GM12878 (cell line): ENCODE measurements at regions of chrX and their contacts with region 1.

Region 1: DNA sequence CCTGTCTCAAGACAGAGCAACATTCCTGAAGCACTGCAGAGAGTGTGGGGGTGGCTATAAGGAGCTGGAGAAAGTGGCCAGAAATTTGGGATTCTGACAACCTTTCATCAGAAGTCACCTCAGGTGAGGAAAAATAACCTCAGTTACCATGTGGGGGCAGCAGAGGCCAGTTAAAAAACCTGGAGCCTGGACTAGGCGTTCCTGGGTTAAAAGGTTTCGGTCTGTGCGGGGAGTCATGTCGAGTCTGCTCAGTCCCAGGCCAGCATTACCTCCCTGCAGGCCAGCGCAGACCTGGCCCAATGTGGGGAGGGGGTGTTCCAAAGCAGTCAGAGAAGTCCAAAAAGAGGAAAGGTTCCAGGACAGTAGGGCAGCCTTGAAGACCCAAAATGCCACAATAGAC is 10.9 kb upstream of the NALF2 start:
- DNase-seq: no peak
- ATAC-seq: peak; percentile 64
- H3K4me3 ChIP-seq: no peak overlapping the region
- H3K27ac ChIP-seq: no peak overlapping the region
- H3K4me1 ChIP-seq: no peaks in the 10 kb centered on the region
- H3K27me3 ChIP-seq: no peaks in the 10 kb centered on the region
- CTCF ChIP-seq: peak; percentile 28 to 45 (median 38); a peak in 4 of 6 replicates
- EP300 ChIP-seq: no peak
- POLR2A ChIP-seq: no peak
- RAD21 ChIP-seq: peak; percentile 64

Region 2: GRCh38 chrX:69524781-69525363 is 31.7 kb after region 1 on chrX:
- CTCF ChIA-PET with region 1: no interaction called
- POLR2A ChIA-PET with region 1: no interaction called
- RAD21 ChIA-PET with region 1: no interaction called
- SMC1A ChIA-PET with region 1: no interaction called
- in situ Hi-C with region 1: no loop called
- intact Hi-C with region 1: no loop called
- DNase-seq: no peak
- ATAC-seq: no peak
- H3K4me3 ChIP-seq: no peak overlapping the region
- H3K27ac ChIP-seq: no peak overlapping the region
- H3K4me1 ChIP-seq: no peaks in the 10 kb centered on the region
- H3K27me3 ChIP-seq: no peaks in the 10 kb centered on the region
- CTCF ChIP-seq: no peak
- EP300 ChIP-seq: no peak
- POLR2A ChIP-seq: no peak
- RAD21 ChIP-seq: no peak

Region 3: DNA sequence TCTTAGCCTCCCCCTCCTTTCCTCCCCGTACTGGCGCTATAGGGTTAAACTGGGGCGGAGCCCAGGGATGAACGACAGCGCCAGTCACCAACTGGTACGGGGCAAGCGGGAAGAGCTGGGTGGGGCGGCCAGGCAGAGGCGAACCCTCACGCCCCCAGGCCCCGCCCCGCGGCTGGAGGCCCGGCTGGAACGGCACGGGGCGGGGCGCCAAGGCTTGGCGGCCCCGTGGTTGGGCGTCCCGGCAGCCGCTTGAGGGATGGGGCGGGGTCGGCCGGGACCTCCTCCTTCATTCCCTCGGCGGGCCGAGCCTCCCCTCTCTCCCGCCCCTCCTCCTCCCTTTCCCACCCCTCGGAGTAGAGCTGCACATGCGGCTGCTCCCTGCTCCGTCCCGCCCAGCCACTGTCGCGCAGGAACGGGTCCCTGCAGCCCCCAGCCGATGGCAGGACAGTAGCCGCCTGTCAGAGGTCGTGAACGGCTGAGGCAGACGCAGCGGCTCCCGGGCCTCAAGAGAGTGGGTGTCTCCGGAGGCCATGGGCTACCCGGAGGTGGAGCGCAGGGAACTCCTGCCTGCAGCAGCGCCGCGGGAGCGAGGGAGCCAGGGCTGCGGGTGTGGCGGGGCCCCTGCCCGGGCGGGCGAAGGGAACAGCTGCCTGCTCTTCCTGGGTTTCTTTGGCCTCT is 122.7 kb after region 1 on chrX and contains the start of gene EDA:
- CTCF ChIA-PET with region 1: interaction called, 7 read pairs
- POLR2A ChIA-PET with region 1: no interaction called
- RAD21 ChIA-PET with region 1: no interaction called
- SMC1A ChIA-PET with region 1: interaction called, 4 read pairs
- in situ Hi-C with region 1: no loop called
- intact Hi-C with region 1: loop called (anchors 5 kb)
- DNase-seq: no peak
- ATAC-seq: peak; percentile 84
- H3K4me3 ChIP-seq: no peak within 1 kb of the TSS
- H3K27ac ChIP-seq: no peak within 1 kb of the TSS
- H3K4me1 ChIP-seq: no peaks in the 10 kb centered on the region
- H3K27me3 ChIP-seq: no peaks in the 10 kb centered on the region
- CTCF ChIP-seq: no peak
- EP300 ChIP-seq: no peak
- POLR2A ChIP-seq: no peak
- RAD21 ChIP-seq: no peak
- polyA plus RNA-seq, gene EDA: not detected

Region 4: DNA sequence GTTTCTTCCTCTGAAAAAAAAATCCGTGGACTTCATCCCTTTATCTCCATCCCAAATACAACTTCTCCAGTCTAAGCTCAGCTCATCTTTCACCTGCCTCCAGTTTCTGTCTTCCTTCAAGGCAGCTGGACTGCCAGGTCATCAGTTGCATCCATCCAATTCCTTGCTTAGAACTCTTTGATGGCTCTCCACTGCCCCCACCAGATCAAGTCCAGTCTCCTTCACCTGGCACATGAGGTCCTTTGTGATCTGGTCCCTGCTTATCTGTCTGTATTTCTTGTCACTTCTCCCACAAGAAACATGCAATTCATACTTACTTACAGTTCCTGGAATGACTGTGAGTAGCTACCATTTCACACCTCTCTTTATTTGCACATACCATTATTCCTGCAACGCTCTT is 602.9 kb after region 1 on chrX:
- CTCF ChIA-PET with region 1: interaction called, 8 read pairs
- POLR2A ChIA-PET with region 1: no interaction called
- RAD21 ChIA-PET with region 1: no interaction called
- SMC1A ChIA-PET with region 1: interaction called, 3 read pairs
- in situ Hi-C with region 1: no loop called
- intact Hi-C with region 1: loop called (anchors 5 kb)
- DNase-seq: no peak
- ATAC-seq: no peak
- H3K4me3 ChIP-seq: no peak overlapping the region
- H3K27ac ChIP-seq: no peak overlapping the region
- H3K4me1 ChIP-seq: no peaks in the 10 kb centered on the region
- H3K27me3 ChIP-seq: no peaks in the 10 kb centered on the region
- CTCF ChIP-seq: 0 out of 6 replicates have a peak, but pooled peaks of 1 of the 3 experiments have one; percentile 9
- EP300 ChIP-seq: no peak
- POLR2A ChIP-seq: no peak
- RAD21 ChIP-seq: no peak